Lower leg skin (tissue), 4 donors: ENCODE measurements at regions of chr3 and their contacts with region 1.

Region 1: DNA sequence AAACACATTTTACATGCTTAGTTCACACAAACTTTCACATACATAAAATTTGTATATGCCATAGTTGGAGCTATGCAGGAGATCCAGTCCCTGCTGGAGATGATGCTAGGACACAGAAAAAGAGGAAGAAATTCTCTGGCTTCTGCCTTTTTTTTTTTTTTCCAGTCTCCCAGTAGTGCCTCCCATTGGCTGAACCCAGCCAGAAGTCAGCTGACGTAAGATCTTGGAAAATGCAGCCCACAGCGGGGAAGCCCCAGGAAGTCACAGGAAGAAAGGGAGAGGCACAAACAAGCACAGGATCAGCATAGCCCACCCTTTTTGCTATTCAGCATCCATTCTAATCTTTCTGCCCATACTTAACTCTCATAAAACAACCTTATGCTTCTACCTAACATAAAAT is 38.5 kb downstream of the SCN11A start:
- DNase-seq: no peak
- H3K4me3 ChIP-seq: no peak overlapping the region
- CTCF ChIP-seq: no peak
- POLR2A ChIP-seq: no peak

Region 2: GRCh38 chr3:39192490-39193092 is 179.3 kb after region 1 on chr3 and contains the start of gene XIRP1:
- intact Hi-C with region 1: no loop called
- DNase-seq: no peak
- H3K4me3 ChIP-seq: no peak within 1 kb of the TSS
- CTCF ChIP-seq: no peak
- POLR2A ChIP-seq: no peak
- total RNA-seq, gene XIRP1: not detected

Region 3: DNA sequence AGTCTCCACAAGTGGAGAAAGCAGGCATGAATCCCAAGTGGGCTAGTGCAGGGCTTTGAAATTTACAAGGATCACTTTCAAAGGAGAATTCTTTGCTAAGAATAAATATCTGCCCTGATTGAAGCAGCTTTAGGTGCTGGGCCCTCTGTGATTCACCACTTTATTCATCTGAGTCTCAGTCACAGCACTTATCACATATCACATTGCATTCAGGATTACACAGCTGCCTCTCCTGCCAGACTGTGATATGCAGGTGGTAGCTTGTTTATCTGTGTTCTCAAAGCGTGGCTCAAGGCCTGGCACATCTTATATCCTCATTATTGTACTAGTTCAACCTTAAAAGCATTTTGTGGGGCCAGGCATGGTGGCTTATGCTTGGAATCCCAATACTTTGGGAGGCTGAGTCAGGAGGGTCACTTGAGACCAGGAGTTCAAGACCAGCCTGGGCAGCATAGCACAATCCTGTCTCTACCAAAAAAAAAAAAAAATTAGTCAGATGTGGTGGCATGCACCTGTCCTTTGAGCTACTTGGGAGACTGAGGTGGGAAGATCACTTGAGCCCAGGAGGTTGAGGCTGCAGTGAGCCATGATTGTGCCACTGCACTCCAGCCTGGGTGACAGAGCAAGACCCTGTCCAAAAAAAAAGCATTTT is 1139.3 kb after region 1 on chr3:
- intact Hi-C with region 1: loop called (anchors 5 kb)
- DNase-seq: no peak
- H3K4me3 ChIP-seq: no peak overlapping the region
- CTCF ChIP-seq: no peak
- POLR2A ChIP-seq: no peak